ENCODE measurements at regions of chr2 and their contacts with region 1.

Region 1: DNA sequence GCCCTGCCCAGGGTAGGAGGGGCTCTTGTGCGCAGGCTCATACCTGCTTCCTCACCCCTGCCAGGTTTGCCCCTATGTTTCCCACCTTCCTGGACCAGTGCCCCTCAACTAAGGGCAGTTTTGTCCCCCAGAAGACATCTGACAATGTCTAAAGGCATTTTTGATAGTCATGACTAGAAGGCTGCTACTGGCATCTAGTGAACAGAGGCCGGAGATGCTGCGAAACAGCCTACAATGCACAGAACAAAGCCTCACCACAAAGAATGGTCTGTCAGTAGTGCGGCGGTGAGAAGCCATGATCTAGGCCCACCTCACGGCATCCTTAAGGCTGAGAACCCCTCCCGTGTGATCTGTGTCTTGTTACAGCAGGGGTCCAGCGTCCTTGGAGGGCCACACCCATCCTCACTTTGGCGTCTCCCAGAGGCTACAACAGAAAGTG is 96.0 kb downstream of the TMEM17 start:
- DNase-seq: no peak
- ATAC-seq: no peak
- H3K4me3 ChIP-seq: no peak overlapping the region
- H3K27ac ChIP-seq: no peak overlapping the region
- H3K4me1 ChIP-seq: peaks cover 5% of the 10 kb centered on the region
- H3K27me3 ChIP-seq: no peaks in the 10 kb centered on the region
- CTCF ChIP-seq: 0 out of 2 replicates have a peak, but pooled peaks have one; percentile 22

Region 2: DNA sequence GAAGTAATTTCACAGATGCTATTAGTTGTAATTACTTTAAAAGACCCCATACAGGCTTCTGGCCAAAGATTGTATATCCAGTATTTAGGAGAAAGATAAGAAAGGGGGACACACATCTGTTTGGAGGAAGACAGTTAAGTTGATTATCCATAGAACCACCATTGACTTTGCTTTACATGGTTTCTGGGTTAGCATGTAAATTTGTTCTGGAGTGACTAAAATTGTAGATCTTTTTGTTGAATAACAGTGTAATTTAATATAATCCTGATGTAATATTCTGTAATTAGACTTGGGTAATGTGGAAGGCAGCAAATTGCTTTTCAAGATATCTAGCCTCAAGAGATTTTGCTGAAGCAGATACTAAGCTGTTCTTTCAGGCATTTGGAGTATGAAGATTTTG is 487.3 kb before region 1 on chr2:
- CTCF ChIA-PET with region 1: no interaction called
- POLR2A ChIA-PET with region 1: no interaction called
- intact Hi-C with region 1: loop called (anchors 1 kb)
- DNase-seq: no peak
- ATAC-seq: no peak
- H3K4me3 ChIP-seq: no peak overlapping the region
- H3K27ac ChIP-seq: no peak overlapping the region
- H3K4me1 ChIP-seq: no peaks in the 10 kb centered on the region
- H3K27me3 ChIP-seq: no peaks in the 10 kb centered on the region
- CTCF ChIP-seq: no peak

Region 3: DNA sequence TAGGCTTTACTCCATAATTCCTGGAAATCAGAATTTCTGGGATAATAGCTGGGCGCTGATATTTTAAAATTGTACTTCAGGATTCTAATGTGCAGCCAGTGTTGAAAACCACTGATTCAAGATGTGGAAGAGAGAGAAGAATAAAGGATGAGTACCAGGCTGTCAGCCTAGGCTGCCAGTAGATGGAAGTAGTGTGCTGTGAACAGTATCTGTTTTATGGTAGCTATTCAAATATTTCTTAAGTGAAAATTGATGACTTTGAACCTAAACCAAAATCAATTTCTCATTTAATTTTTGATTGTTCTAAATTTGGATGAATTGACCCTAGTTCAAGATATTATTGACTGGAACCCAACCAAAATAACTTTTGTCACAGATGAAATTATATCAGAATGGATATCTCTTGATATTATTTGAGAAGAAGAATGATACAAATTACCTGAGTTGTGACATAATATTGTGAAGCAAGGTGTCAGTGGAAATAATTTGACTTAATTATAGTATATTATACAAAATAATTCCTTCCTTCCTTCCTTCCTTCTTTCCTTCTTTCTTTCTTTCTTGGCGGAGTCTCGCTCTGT is 416.5 kb before region 1 on chr2:
- CTCF ChIA-PET with region 1: interaction called, 5 read pairs
- POLR2A ChIA-PET with region 1: no interaction called
- intact Hi-C with region 1: loop called (anchors 1 kb)
- DNase-seq: peak; percentile 68
- ATAC-seq: peak; percentile 80
- H3K4me3 ChIP-seq: no peak overlapping the region
- H3K27ac ChIP-seq: no peak overlapping the region
- H3K4me1 ChIP-seq: no peaks in the 10 kb centered on the region
- H3K27me3 ChIP-seq: no peaks in the 10 kb centered on the region
- CTCF ChIP-seq: peak; percentile 89

Region 4: GRCh38 chr2:62010632-62011276 is 399.3 kb before region 1 on chr2:
- CTCF ChIA-PET with region 1: no interaction called
- POLR2A ChIA-PET with region 1: no interaction called
- intact Hi-C with region 1: no loop called
- DNase-seq: no peak
- ATAC-seq: no peak
- H3K4me3 ChIP-seq: no peak overlapping the region
- H3K27ac ChIP-seq: no peak overlapping the region
- H3K4me1 ChIP-seq: no peaks in the 10 kb centered on the region
- H3K27me3 ChIP-seq: no peaks in the 10 kb centered on the region
- CTCF ChIP-seq: no peak

Region 5: DNA sequence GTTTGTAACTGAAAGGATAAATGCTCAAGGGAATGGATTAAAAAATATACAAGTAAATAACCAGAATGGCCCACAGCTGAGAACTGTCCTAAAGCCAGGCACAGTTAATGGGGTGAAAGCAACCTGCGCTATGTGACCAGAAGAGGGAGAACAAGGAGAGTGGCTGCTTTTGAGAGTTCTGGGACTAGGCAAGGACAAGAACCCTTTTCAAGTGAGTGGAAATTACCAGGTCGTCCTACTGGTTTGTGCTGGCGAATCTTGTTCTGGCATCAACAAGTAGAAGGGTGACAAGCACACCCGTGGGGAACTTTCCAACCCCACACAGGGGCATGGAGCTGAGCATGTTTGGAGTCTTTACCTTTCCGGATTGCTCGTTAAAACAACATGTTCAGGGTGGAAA is 13.2 kb after region 1 on chr2:
- CTCF ChIA-PET with region 1: no interaction called
- POLR2A ChIA-PET with region 1: no interaction called
- intact Hi-C with region 1: no loop called
- DNase-seq: peak; percentile 43
- ATAC-seq: peak; percentile 68
- H3K4me3 ChIP-seq: no peak overlapping the region
- H3K27ac ChIP-seq: no peak overlapping the region
- H3K4me1 ChIP-seq: peaks cover 5% of the 10 kb centered on the region; the same call in 1 of the 2 replicates
- H3K27me3 ChIP-seq: no peaks in the 10 kb centered on the region
- CTCF ChIP-seq: peak; percentile 49

Region 6: GRCh38 chr2:63537306-63537705 is 1127.3 kb after region 1 on chr2:
- CTCF ChIA-PET with region 1: no interaction called
- POLR2A ChIA-PET with region 1: no interaction called
- intact Hi-C with region 1: no loop called
- DNase-seq: peak; percentile 21
- ATAC-seq: no peak
- H3K4me3 ChIP-seq: no peak overlapping the region
- H3K27ac ChIP-seq: no peak overlapping the region
- H3K4me1 ChIP-seq: no peaks in the 10 kb centered on the region
- H3K27me3 ChIP-seq: no peaks in the 10 kb centered on the region
- CTCF ChIP-seq: no peak